Natural killer cell (primary cell): ENCODE measurements at regions of chr4 and their contacts with region 1.

Region 1: GRCh38 chr4:168480931-168481611 is 779 bp upstream of the DDX60L start:
- DNase-seq: peak; percentile 28 to 86
- ATAC-seq: peak; percentile 50 to 77 (median 64)
- H3K4me3 ChIP-seq: peak overlapping the region; percentile 71
- H3K4me3 Mint-ChIP-seq: peak overlapping the region; percentile 96
- H3K27ac ChIP-seq: peak overlapping the region; percentile 95
- H3K27ac Mint-ChIP-seq: peak overlapping the region; percentile 97 to 100
- H3K4me1 ChIP-seq: peaks cover 3% of the 10 kb centered on the region
- H3K4me1 Mint-ChIP-seq: peaks cover 41 to 49% of the 10 kb centered on the region in 2 donors
- H3K27me3 ChIP-seq: no peaks in the 10 kb centered on the region
- H3K27me3 Mint-ChIP-seq: peaks cover 9 to 16% of the 10 kb centered on the region in 2 donors
- CTCF ChIP-seq: no peak

Region 2: GRCh38 chr4:168318266-168318895 is 162.7 kb before region 1 on chr4 and contains the start of gene DDX60:
- intact Hi-C with region 1: loop called (anchors 1 kb)
- DNase-seq: peak; percentile 79 to 95
- ATAC-seq: peak; percentile 92 to 95 (median 94)
- H3K4me3 ChIP-seq: peak within 1 kb of the TSS; percentile 83
- H3K4me3 Mint-ChIP-seq: peak within 1 kb of the TSS; percentile 94
- H3K27ac ChIP-seq: peak within 1 kb of the TSS; percentile 93
- H3K27ac Mint-ChIP-seq: peak within 1 kb of the TSS; percentile 96 to 99
- H3K4me1 ChIP-seq: peaks cover 6% of the 10 kb centered on the region
- H3K4me1 Mint-ChIP-seq: peaks cover 26 to 33% of the 10 kb centered on the region in 2 donors
- H3K27me3 ChIP-seq: no peaks in the 10 kb centered on the region
- H3K27me3 Mint-ChIP-seq: no peaks in the 10 kb centered on the region
- CTCF ChIP-seq: peak; percentile 35
- total RNA-seq, gene DDX60: 29.4 to 37.2 (median 31.5) TPM

Region 3: GRCh38 chr4:168451744-168452390 is 29.2 kb before region 1 on chr4:
- intact Hi-C with region 1: loop called (anchors 1 kb)
- DNase-seq: no peak
- ATAC-seq: peak in 2 of 3 donors; percentile 75 to 87
- H3K4me3 ChIP-seq: no peak overlapping the region
- H3K4me3 Mint-ChIP-seq: peak overlapping the region; percentile 1
- H3K27ac ChIP-seq: no peak overlapping the region
- H3K27ac Mint-ChIP-seq: peak overlapping the region; percentile 58 to 89
- H3K4me1 ChIP-seq: no peaks in the 10 kb centered on the region
- H3K4me1 Mint-ChIP-seq: peaks cover 22% of the 10 kb centered on the region in 2 donors
- H3K27me3 ChIP-seq: no peaks in the 10 kb centered on the region
- H3K27me3 Mint-ChIP-seq: no peaks in the 10 kb centered on the region
- CTCF ChIP-seq: no peak

Region 4: GRCh38 chr4:169619959-169620879 is 1139.1 kb after region 1 on chr4 and contains the start of gene CLCN3:
- intact Hi-C with region 1: loop called (anchors 2 kb)
- DNase-seq: peak; percentile 94
- ATAC-seq: peak; percentile 81 to 94 (median 86)
- H3K4me3 ChIP-seq: peak within 1 kb of the TSS; percentile 63
- H3K4me3 Mint-ChIP-seq: peak within 1 kb of the TSS; percentile 95
- H3K27ac ChIP-seq: peak within 1 kb of the TSS; percentile 97
- H3K27ac Mint-ChIP-seq: peak within 1 kb of the TSS; percentile 99 to 100
- H3K4me1 ChIP-seq: peaks cover 9% of the 10 kb centered on the region
- H3K4me1 Mint-ChIP-seq: peaks cover 50 to 55% of the 10 kb centered on the region in 2 donors
- H3K27me3 ChIP-seq: no peaks in the 10 kb centered on the region
- H3K27me3 Mint-ChIP-seq: no peaks in the 10 kb centered on the region
- CTCF ChIP-seq: no peak
- total RNA-seq, gene CLCN3: 20.7 to 26.0 (median 21.0) TPM